Tibial artery (tissue), 4 donors: ENCODE measurements at regions of chr1 and their contacts with region 1.

Region 1: DNA sequence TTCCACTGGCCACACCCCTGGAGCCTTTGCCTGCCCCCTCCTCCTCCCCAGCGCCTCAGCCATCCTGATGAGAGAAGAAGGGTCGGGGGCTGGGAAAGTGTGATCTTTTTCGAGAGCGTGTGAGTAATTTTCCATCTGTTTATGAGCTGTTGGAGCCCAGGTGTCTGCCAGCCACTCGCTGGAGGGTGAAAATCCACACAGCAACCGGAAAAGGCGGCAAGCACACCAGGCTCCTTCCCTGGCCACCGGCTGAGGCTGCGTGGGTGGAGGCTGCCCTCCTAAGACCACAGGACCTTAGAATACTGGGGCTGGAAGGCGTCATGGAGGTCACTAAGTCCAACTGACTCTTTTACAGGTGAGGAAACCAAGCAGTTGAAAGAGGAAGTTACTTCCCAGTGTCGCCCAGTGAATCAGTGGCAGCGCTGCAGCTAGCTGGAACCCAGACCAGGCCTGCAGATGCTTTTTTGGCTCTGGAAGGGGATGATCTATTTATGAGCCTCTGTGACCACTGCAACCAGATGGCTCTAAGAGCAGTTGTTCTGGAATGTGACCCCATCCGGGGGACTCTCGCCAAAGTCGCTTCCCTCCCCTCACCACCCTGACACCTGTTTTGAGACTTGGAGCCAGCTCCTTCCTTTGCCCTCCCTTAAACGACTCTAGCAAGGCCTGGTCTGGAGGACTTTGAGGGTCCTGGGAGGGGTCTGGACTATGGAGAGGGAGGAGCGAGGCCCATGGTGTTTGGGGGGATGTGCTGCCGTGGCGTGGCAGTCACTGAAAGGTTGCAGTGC is 54.5 kb downstream of the LGR6 start:
- DNase-seq: no peak
- H3K4me3 ChIP-seq: no peak overlapping the region
- H3K27ac ChIP-seq: no peak overlapping the region
- H3K4me1 ChIP-seq: peaks cover 0 to 9% (median 7%) of the 10 kb centered on the region in 4 donors
- H3K27me3 ChIP-seq: no peaks in the 10 kb centered on the region
- CTCF ChIP-seq: no peak

Region 2: DNA sequence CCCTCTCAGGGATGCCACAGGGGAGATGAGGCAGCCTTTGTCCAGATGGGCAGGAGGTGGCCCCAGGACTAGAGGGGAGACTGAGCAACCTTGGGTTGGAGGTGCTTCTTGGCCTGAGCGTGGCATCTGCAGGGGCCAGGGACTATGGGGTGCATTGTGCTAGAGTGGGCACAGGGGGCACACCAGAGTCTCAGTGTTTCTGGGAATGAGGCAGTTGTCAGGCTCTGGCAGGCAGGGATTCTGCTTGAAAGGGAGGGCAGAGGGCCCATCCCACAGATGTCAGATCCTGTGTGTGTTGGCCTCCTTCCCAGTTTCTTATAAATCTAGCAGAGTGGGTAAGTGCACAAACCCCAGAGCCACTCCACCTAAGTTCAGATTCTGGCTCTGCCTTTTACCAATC is 40.8 kb before region 1 on chr1:
- intact Hi-C with region 1: no loop called
- DNase-seq: peak; percentile 35 to 85
- H3K4me3 ChIP-seq: no peak overlapping the region
- H3K27ac ChIP-seq: peak overlapping the region; percentile 47 to 54
- H3K4me1 ChIP-seq: peaks cover 0 to 32% (median 20%) of the 10 kb centered on the region in 4 donors
- H3K27me3 ChIP-seq: no peaks in the 10 kb centered on the region
- CTCF ChIP-seq: peak; percentile 21 to 38

Region 3: DNA sequence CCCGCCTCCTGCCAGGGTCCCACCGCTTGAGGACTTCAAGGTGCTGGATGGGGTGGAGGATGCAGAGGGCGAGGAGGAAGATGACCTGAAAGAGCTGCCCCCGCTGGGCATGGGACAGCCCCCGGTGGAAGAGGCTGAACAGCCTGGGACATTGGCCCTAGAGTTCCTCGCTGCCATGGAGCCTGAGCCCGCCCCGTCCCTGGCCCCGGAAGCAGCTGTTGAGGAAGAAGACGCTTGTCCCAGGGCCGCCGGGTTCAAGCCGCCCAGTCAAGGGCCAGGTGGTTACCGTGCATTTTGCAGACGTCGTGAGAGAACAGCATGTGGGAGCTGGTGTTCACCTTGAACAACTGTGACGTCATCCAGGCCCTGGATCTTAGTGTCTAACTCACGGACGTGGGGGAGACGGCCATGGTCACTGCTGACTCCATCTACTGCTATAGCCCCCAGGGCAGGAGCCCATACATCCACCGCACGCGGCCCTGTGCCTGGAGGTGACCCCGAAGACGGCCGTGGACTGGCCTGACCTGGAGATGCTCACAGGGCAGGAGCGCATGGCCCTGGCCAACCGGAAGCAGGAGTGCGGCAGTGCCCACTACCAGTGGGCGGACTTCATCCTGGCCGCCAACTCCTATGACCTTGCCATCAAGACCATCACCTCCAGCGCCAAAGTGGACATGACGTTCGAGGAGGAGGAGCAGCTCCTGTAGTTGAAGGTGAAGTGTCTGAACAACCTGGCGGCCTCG is 190.5 kb after region 1 on chr1:
- intact Hi-C with region 1: loop called (anchors 5 kb)
- DNase-seq: no peak
- H3K4me3 ChIP-seq: no peak overlapping the region
- H3K27ac ChIP-seq: no peak overlapping the region
- H3K4me1 ChIP-seq: no peaks in the 10 kb centered on the region
- H3K27me3 ChIP-seq: no peaks in the 10 kb centered on the region
- CTCF ChIP-seq: no peak